Prostate gland (tissue), 2 donors: ENCODE measurements at regions of chr19 and their contacts with region 1.

Region 1: GRCh38 chr19:19320362-19321142 is at the starts of genes MAU2 and SUGP1:
- DNase-seq: peak; percentile 86
- H3K4me3 ChIP-seq: peak within 1 kb of the TSS; percentile 98 to 100
- H3K27ac ChIP-seq: peak within 1 kb of the TSS; percentile 88 to 90
- H3K4me1 ChIP-seq: peaks cover 4% of the 10 kb centered on the region
- H3K27me3 ChIP-seq: no peaks in the 10 kb centered on the region
- CTCF ChIP-seq: peak; percentile 22 to 75 (median 42)
- POLR2A ChIP-seq: peak; percentile 47
- total RNA-seq, gene MAU2: 52.5 to 106 TPM
- total RNA-seq, gene SUGP1: 51.1 to 53.5 TPM

Region 2: GRCh38 chr19:19192078-19192882 is 128.3 kb before region 1 on chr19 and contains the starts of genes BORCS8 and RFXANK:
- intact Hi-C with region 1: loop called (anchors 5 kb)
- DNase-seq: peak; percentile 99
- H3K4me3 ChIP-seq: peak within 1 kb of the TSS; percentile 73 to 85
- H3K27ac ChIP-seq: peak within 1 kb of the TSS; percentile 98
- H3K4me1 ChIP-seq: peaks cover 4% of the 10 kb centered on the region
- H3K27me3 ChIP-seq: no peaks in the 10 kb centered on the region
- CTCF ChIP-seq: peak in 1 of 4 experiments; percentile 5
- POLR2A ChIP-seq: peak; percentile 48
- total RNA-seq, gene BORCS8: 18.0 to 26.9 TPM
- total RNA-seq, gene RFXANK: 44.2 to 46.3 TPM